Dorsolateral prefrontal cortex (tissue), 120 donors: ENCODE measurements at regions of chr11 and their contacts with region 1.

Region 1: GRCh38 chr11:34364102-34364501 is 6.3 kb upstream of the ABTB2 start:
- DNase-seq: no peak
- H3K4me3 ChIP-seq: no peak overlapping the region
- H3K27ac ChIP-seq: no peak overlapping the region
- H3K27me3 ChIP-seq: peaks cover 0 to 3% (median 0%) of the 10 kb centered on the region in 45 donors
- CTCF ChIP-seq: no peak

Region 2: DNA sequence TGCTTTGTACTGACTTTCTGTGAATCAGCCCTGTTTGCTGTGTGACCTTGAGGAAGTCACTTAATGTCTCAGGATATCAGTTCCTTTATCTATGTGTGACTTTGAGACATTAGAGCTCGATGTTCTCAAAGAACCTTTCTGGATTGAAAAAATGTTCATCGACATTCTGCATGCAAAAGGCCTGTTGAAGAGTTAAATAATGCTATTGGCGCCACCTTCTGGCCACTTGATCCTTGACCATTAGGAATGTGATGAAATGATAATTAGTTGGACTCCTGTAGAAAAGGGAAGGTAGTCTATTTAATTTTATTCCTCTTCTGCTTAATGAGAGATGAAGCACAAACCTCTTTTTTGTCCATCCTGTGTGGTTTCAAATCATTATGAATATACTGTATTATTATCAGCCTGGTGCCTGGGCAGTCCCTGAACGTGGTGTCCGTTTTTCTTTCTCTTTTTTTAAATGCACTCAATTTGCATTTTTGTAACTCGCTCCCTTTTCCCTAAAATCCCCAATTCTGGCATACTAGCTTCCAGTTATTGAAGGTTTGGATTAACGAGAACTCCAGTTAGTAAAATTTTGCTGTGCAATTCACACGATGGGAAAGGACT is 128.8 kb after region 1 on chr11:
- intact Hi-C with region 1: loop called in 1 of 2 experiments (anchors 5 kb)
- DNase-seq: peak in 5 of 10 donors; percentile 37 to 85 (median 56)
- H3K4me3 ChIP-seq: peak overlapping the region in 7 of 59 donors; percentile 6 to 17 (median 14)
- H3K27ac ChIP-seq: no peak overlapping the region
- H3K27me3 ChIP-seq: no peaks in the 10 kb centered on the region
- CTCF ChIP-seq: peak; percentile 58 to 85 (median 73)

Region 3: GRCh38 chr11:34537656-34538055 is 173.6 kb after region 1 on chr11:
- intact Hi-C with region 1: no loop called
- DNase-seq: no peak
- H3K4me3 ChIP-seq: no peak overlapping the region
- H3K27ac ChIP-seq: no peak overlapping the region
- H3K27me3 ChIP-seq: peaks cover 0 to 6% (median 0%) of the 10 kb centered on the region in 45 donors
- CTCF ChIP-seq: no peak